Left ventricle myocardium superior (tissue), 1 donor: ENCODE measurements at regions of chr15 and their contacts with region 1.

Region 1: GRCh38 chr15:59278120-59278519 is 71.5 kb downstream of the LDHAL6B start:
- DNase-seq: no peak
- ATAC-seq: no peak

Region 2: GRCh38 chr15:59138243-59138642 is 139.9 kb before region 1 on chr15:
- intact Hi-C with region 1: no loop called
- DNase-seq: peak; percentile 48
- ATAC-seq: peak; percentile 61

Region 3: GRCh38 chr15:59304034-59304795 is 26.1 kb after region 1 on chr15:
- intact Hi-C with region 1: loop called (anchors 2 kb)
- DNase-seq: no peak
- ATAC-seq: no peak